Activated CD4-positive, alpha-beta memory T cell treated with anti-CD3 and anti-CD28 coated beads for 36 hours (primary cell): ENCODE measurements at regions of chr19 and their contacts with region 1.

Region 1: DNA sequence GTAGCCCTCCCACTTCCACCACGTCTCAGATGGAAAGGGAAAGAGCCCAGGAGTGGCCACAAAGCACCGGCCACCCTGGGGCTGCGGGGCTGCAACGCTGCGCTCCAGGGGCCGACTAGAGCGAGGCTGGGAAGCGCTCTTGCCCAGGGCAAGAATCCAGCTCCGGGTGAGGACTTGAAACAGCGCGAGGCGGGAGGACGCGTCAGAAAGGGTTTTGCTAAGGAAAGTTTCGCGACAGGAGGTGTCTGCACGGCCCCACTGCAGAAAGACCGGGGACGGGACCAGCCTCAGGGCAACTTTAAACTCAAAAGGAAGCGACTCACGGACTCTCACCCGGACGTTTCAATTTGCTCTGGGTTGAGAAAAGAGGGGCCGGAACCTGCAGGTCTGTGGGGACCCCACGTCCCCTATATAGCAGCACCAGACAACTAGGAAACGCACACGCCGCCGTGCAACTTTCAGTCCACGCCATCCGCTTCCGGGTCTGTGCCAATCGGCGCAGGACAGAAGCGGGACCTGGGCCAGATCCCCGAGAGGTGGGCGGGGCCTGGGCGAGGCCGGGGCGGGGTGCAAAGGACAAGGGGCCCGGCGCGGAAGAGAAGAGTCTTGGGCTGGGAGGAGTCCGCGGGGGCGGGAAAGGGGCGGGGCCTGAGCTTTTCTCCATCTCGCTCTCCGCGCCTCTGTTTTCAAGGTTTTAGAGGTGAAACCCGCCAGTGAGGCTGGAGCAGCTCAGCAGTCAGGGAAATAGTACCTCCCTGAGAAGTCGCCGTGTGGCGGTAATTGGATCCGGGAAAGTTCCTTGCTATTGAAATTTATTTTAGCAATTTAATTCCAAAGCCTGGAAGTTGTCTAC is at the start of gene ZNF816:
- DNase-seq: peak; percentile 100
- H3K4me3 Mint-ChIP-seq: peak within 1 kb of the TSS; percentile 94
- H3K27ac Mint-ChIP-seq: peak within 1 kb of the TSS; percentile 86
- H3K4me1 Mint-ChIP-seq: peaks cover 25% of the 10 kb centered on the region
- H3K27me3 Mint-ChIP-seq: no peaks in the 10 kb centered on the region
- total RNA-seq, gene ZNF816: 11.0 to 11.4 TPM

Region 2: GRCh38 chr19:52897144-52897935 is 65.3 kb before region 1 on chr19 and contains the start of gene ZNF320:
- CTCF ChIA-PET with region 1: no interaction called
- POLR2A ChIA-PET with region 1: no interaction called
- intact Hi-C with region 1: loop called (anchors 2 kb)
- DNase-seq: peak; percentile 96
- H3K4me3 Mint-ChIP-seq: peak within 1 kb of the TSS; percentile 87
- H3K27ac Mint-ChIP-seq: peak within 1 kb of the TSS; percentile 88
- H3K4me1 Mint-ChIP-seq: peaks cover 11% of the 10 kb centered on the region
- H3K27me3 Mint-ChIP-seq: no peaks in the 10 kb centered on the region
- total RNA-seq, gene ZNF320: 5.4 to 7.0 TPM

Region 3: DNA sequence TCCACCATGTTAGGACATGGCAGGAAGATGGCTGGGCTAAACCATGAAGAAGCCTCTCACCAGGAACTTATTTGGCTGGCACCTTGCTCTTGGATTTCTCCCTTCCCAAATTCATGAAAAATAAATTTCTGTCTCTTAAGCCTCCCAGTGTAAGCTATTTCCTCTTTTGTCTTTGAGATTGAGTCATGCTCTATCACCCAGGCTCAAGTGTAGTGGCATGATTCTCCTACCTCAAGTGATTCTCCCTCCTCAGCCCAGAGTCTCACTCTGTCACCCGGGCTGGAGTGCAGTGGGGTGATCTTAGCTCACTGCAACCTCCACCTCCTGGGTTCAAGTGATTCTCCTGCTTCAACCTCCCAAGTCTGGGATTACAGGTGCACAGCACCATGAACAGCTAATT is 52.0 kb before region 1 on chr19:
- CTCF ChIA-PET with region 1: no interaction called
- POLR2A ChIA-PET with region 1: no interaction called
- intact Hi-C with region 1: no loop called
- DNase-seq: no peak
- H3K4me3 Mint-ChIP-seq: no peak overlapping the region
- H3K27ac Mint-ChIP-seq: no peak overlapping the region
- H3K4me1 Mint-ChIP-seq: no peaks in the 10 kb centered on the region
- H3K27me3 Mint-ChIP-seq: no peaks in the 10 kb centered on the region

Region 4: GRCh38 chr19:52922841-52923777 is 39.5 kb before region 1 on chr19 and contains the start of gene ZNF888:
- CTCF ChIA-PET with region 1: no interaction called
- POLR2A ChIA-PET with region 1: no interaction called
- intact Hi-C with region 1: loop called (anchors 2 kb)
- DNase-seq: peak; percentile 96
- H3K4me3 Mint-ChIP-seq: peak within 1 kb of the TSS; percentile 92
- H3K27ac Mint-ChIP-seq: peak within 1 kb of the TSS; percentile 87
- H3K4me1 Mint-ChIP-seq: peaks cover 23% of the 10 kb centered on the region
- H3K27me3 Mint-ChIP-seq: no peaks in the 10 kb centered on the region
- total RNA-seq, gene ZNF888: 5.0 to 6.3 TPM

Region 5: GRCh38 chr19:52942386-52943133 is 20.1 kb before region 1 on chr19:
- CTCF ChIA-PET with region 1: no interaction called
- POLR2A ChIA-PET with region 1: no interaction called
- intact Hi-C with region 1: loop called (anchors 1 kb)
- DNase-seq: peak; percentile 98
- H3K4me3 Mint-ChIP-seq: peak overlapping the region; percentile 81
- H3K27ac Mint-ChIP-seq: peak overlapping the region; percentile 82
- H3K4me1 Mint-ChIP-seq: peaks cover 26% of the 10 kb centered on the region
- H3K27me3 Mint-ChIP-seq: no peaks in the 10 kb centered on the region

Region 6: DNA sequence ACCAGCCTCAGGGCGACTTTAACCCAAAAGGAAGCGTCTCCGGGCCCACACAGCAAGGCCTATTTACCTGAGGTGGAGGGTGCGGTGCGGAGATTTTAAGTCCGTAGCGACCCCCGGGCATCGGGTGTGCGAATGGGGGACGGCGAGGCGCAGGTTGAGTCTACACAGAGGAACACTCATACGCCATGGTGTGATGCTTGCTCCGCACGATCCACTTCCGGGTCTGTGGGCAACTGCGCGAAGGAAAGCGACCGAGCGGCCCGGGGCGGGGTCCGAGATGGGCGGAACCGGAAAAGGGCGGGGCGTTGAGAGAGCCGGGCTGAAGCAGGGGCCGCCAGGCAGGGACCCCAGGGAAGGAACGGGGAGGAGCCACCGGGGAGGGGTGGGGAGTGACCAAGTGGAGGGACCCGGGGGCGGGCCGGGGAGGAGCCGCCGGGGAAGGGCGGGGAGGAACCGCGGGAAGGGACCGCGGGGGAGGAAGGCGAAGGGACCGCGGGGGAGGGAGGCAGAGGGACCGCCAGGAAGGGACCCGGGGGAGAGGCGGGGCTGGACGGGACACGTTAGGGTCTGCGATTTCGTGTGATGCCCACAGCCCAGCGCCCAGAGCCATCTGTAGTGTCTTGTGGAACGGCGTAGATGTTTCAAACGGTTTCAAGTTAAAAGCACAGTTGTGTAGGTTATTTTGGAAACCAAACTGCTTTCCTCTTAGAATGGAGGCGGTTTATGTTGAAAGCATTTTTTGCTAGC is 140.8 kb after region 1 on chr19 and contains the start of gene ZNF160:
- CTCF ChIA-PET with region 1: no interaction called
- POLR2A ChIA-PET with region 1: no interaction called
- intact Hi-C with region 1: loop called (anchors 10 kb)
- DNase-seq: peak; percentile 99
- H3K4me3 Mint-ChIP-seq: peak within 1 kb of the TSS; percentile 89
- H3K27ac Mint-ChIP-seq: peak within 1 kb of the TSS; percentile 81
- H3K4me1 Mint-ChIP-seq: peaks cover 28% of the 10 kb centered on the region
- H3K27me3 Mint-ChIP-seq: peaks cover 2% of the 10 kb centered on the region
- total RNA-seq, gene ZNF160: 26.3 to 28.9 TPM

Region 7: DNA sequence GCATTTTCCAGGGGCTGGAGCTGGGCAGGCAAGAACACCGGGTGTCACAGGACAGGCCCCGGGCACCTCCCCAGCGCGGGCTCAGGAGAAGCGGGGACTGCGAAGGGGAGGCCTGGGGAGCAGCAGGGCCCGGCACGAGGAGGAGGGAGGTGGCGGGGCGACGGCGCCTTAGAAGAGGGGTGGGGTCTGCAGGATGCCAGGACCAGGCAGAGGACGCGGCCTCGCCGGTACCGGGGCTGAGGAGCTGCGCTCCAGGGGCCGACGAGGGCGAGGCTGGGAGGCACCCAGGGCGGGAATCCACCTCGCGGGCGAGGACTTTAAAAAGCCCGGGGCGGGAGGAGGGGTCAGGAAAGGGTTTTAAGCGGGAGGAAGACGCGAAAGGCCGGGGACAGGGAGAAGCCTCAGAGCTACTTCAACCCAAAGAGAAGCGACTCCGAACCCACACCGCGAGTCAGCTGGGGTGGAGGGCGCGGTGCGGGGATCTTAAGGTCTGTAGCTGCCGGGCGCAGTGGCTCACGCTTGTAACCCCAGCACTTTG is 195.6 kb after region 1 on chr19:
- CTCF ChIA-PET with region 1: no interaction called
- POLR2A ChIA-PET with region 1: no interaction called
- intact Hi-C with region 1: loop called (anchors 2 kb)
- DNase-seq: peak; percentile 62
- H3K4me3 Mint-ChIP-seq: peak overlapping the region; percentile 81
- H3K27ac Mint-ChIP-seq: peak overlapping the region; percentile 80
- H3K4me1 Mint-ChIP-seq: peaks cover 15% of the 10 kb centered on the region
- H3K27me3 Mint-ChIP-seq: no peaks in the 10 kb centered on the region